Activated T-helper 1 cell treated with anti-CD3 and anti-CD28 coated beads, Interleukin-12 subunit alpha, Interleukin-12 subunit beta, Interleukin-2, Interleukin-4 antibody, amounts not matched to agents 30 ng/mL and 10 ng/mL and 1 ng/mL, durations not matched to agents 14 hours and 24 hours and 36 hours (primary cell): ENCODE measurements at regions of chr12 and their contacts with region 1.

Region 1: DNA sequence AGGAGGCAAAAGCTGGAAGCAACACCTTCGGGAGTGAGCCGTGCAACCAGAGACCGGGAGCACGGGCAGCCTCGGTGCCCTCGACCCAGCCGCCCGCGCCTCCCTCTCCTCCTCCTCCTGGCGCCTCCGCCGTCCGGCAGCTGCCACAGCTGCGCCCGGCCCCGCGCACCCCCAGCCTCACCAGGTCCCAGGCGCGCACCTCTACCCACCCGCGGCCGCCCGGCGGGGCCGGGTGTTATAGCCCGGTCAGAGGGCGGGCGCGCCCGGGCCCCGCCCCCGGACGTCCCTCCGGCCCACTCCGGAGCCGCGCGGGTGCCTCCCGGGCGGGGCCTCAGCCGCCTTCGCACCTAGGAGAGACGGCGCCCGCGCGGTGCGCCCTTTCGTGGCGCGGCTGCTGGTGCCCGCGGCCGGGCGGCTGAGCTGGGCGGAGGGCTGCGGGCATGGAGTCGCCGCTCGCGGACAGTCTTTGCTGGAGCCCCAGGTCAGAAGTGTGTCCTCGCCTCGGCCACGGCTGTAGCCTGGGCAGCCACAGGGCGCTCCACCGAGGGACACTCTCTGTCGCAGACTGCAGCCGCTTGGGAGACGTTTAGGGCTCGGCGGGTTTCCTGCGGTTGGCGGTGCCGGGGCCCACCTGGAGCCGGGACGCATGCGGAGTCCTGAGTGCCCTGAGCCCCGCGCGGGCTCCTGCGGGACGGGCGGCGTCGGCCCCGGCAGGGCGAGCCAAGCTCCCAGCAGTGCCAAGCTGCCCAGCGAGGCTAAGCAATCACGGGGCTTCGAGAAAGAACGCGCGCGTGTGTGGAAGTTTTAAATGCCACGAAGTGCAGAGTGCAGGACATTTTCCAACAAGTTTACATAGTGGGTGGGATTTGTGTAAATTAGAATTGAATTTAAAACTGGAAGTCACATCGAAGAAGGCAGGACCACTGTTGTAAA is at the start of gene CPM:
- DNase-seq: peak; percentile 81
- H3K4me3 Mint-ChIP-seq: peak within 1 kb of the TSS; percentile 96
- H3K27ac Mint-ChIP-seq: peak within 1 kb of the TSS; percentile 88
- H3K4me1 Mint-ChIP-seq: peaks cover 28% of the 10 kb centered on the region
- H3K27me3 Mint-ChIP-seq: peaks cover 19% of the 10 kb centered on the region
- total RNA-seq, gene CPM: 55.0 and 61.5 TPM in 2 replicates

Region 2: GRCh38 chr12:68808388-68809189 is 124.6 kb before region 1 on chr12:
- intact Hi-C with region 1: no loop called
- DNase-seq: peak; percentile 68
- H3K4me3 Mint-ChIP-seq: peak overlapping the region; percentile 97
- H3K27ac Mint-ChIP-seq: peak overlapping the region; percentile 99
- H3K4me1 Mint-ChIP-seq: peaks cover 42% of the 10 kb centered on the region
- H3K27me3 Mint-ChIP-seq: peaks cover 2% of the 10 kb centered on the region

Region 3: DNA sequence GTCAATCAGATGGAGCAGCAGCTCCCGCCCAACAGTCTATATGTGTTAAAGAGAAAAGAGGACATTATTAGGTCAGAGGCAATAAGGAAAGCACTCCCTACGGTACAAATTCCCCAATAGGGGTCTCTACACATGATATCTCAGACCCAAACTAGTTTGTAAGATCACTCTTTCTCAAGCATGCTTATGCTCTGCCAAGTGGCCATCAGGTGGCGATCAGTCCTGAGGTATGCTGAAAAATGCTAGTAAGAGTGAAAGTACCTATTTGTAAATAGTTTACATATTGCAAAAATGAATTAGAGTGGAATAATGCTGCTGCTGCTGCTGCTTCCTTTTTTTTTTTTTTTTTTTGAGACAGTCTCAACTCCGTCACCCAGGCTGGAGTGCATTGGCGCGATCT is 61.3 kb before region 1 on chr12:
- intact Hi-C with region 1: loop called (anchors 2 kb)
- DNase-seq: no peak
- H3K4me3 Mint-ChIP-seq: no peak overlapping the region
- H3K27ac Mint-ChIP-seq: peak overlapping the region; percentile 29
- H3K4me1 Mint-ChIP-seq: peaks cover 5% of the 10 kb centered on the region
- H3K27me3 Mint-ChIP-seq: no peaks in the 10 kb centered on the region

Region 4: GRCh38 chr12:68919581-68920239 is 13.5 kb before region 1 on chr12:
- intact Hi-C with region 1: loop called (anchors 1 kb)
- DNase-seq: no peak
- H3K4me3 Mint-ChIP-seq: no peak overlapping the region
- H3K27ac Mint-ChIP-seq: no peak overlapping the region
- H3K4me1 Mint-ChIP-seq: peaks cover 30% of the 10 kb centered on the region
- H3K27me3 Mint-ChIP-seq: no peaks in the 10 kb centered on the region

Region 5: GRCh38 chr12:68977909-68978610 is 44.8 kb after region 1 on chr12:
- intact Hi-C with region 1: no loop called
- DNase-seq: no peak
- H3K4me3 Mint-ChIP-seq: no peak overlapping the region
- H3K27ac Mint-ChIP-seq: no peak overlapping the region
- H3K4me1 Mint-ChIP-seq: no peaks in the 10 kb centered on the region
- H3K27me3 Mint-ChIP-seq: no peaks in the 10 kb centered on the region

Region 6: GRCh38 chr12:69007101-69007854 is 74.1 kb after region 1 on chr12:
- intact Hi-C with region 1: loop called (anchors 5 kb)
- DNase-seq: no peak
- H3K4me3 Mint-ChIP-seq: no peak overlapping the region
- H3K27ac Mint-ChIP-seq: peak overlapping the region; percentile 21
- H3K4me1 Mint-ChIP-seq: peaks cover 14% of the 10 kb centered on the region
- H3K27me3 Mint-ChIP-seq: peaks cover 8% of the 10 kb centered on the region

Region 7: DNA sequence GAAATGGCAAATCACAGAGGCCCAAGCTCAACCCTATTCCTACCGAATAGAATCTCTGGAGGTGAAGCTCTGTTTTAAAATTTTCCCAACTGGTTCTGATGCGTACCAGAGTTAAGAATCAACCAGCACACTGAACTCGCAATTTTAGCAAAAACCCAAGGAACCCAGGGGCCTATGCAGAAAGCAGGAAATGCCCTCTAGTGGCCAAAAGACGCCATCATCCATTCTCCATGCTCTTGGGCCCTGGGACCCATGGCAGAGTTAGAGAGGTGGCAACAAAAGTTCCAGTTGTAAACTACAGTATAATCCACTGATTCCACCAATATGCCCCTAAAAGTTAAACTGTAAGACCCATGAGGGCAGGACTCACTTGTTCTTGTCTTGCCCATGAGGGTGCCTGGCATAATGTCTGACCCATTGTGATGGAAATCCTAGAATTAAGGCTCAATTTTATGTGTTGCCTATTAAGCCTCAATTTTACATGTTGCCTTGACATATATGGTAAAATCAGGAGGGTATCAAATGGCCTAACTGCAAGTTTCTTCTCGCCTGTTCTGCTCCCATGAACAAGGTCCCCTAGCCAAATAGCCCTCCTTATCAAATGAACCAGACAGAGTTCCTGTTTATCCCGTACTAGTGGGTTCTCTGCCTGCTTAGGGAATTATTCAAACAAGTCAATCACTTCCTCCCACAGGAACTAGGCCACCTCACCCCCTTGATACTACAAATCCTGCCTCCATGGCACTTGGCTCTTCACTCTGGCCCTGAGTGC is 137.3 kb after region 1 on chr12:
- intact Hi-C with region 1: loop called (anchors 1 kb)
- DNase-seq: peak; percentile 38
- H3K4me3 Mint-ChIP-seq: no peak overlapping the region
- H3K27ac Mint-ChIP-seq: no peak overlapping the region
- H3K4me1 Mint-ChIP-seq: peaks cover 28% of the 10 kb centered on the region
- H3K27me3 Mint-ChIP-seq: peaks cover 4% of the 10 kb centered on the region